ENCODE measurements at regions of chr18 and their contacts with region 1.

Region 1: GRCh38 chr18:10519999-10520935 is 5.6 kb upstream of the NAPG start:
- DNase-seq: peak; percentile 92
- ATAC-seq: peak; percentile 91
- H3K4me3 ChIP-seq: peak overlapping the region; percentile 12; the same call in 1 of the 2 replicates
- H3K27ac ChIP-seq: no peak overlapping the region
- H3K4me1 ChIP-seq: peaks cover 8% of the 10 kb centered on the region
- H3K27me3 ChIP-seq: peaks cover 10% of the 10 kb centered on the region; the same call in 1 of the 2 replicates
- CTCF ChIP-seq: peak; percentile 97
- POLR2A ChIP-seq: 0 out of 2 replicates have a peak, but pooled peaks have one; percentile 29
- RAD21 ChIP-seq: peak; percentile 99

Region 2: GRCh38 chr18:9987931-9988330 is 532.3 kb before region 1 on chr18:
- CTCF ChIA-PET with region 1: interaction called, 3 read pairs
- POLR2A ChIA-PET with region 1: no interaction called
- dilution Hi-C with region 1: loop called (anchors 25 kb)
- in situ Hi-C with region 1: no loop called
- intact Hi-C with region 1: no loop called
- DNase-seq: no peak
- ATAC-seq: no peak
- H3K4me3 ChIP-seq: no peak overlapping the region
- H3K27ac ChIP-seq: no peak overlapping the region
- H3K4me1 ChIP-seq: peaks cover 4% of the 10 kb centered on the region; the same call in 1 of the 2 replicates
- H3K27me3 ChIP-seq: peaks cover 25% of the 10 kb centered on the region
- CTCF ChIP-seq: no peak
- POLR2A ChIP-seq: no peak
- RAD21 ChIP-seq: no peak

Region 3: DNA sequence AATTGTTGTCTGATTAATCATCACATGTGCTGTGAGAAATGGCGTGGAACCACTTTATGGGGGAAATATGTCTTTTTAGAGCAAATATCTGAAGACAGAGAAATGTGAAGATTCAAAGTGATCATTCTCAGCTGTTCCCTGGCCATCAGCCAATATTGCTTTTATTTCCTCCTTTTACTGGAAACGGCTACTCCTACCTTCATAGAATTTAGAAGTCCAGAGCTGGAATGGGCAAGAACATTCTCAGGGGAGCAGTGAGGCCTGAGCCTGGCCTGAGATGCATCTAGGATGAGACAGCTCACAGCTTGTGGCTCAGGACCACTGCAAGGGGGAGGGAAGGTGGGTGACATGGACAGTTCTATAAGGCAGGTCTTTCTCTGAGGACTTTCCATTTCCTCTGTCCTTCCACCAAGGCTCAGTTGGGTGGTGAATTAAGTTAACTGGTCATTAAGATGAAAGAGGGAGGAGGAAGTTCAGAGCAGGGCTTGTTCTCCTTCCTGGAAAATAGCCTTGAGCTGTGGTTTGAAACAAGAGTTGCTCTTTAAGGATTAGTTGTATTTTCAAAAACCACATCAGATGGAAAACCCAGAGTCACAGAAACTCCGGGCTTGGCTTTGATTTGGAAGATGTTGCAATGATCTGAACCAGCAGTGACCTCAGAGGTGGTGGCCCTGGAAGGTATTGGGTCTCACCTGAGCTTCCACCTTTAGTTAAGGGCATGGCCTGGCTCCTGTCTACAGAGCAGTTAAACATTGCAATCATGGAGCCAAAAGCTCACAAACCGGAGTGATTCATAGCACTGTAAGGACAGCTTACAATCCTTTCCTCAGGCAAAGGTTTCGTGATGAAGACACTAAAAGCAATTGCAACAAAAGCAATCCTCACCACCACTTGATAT is 462.1 kb before region 1 on chr18:
- CTCF ChIA-PET with region 1: no interaction called
- POLR2A ChIA-PET with region 1: no interaction called
- dilution Hi-C with region 1: no loop called
- in situ Hi-C with region 1: no loop called
- intact Hi-C with region 1: loop called (anchors 5 kb)
- DNase-seq: peak; percentile 84
- ATAC-seq: peak; percentile 45
- H3K4me3 ChIP-seq: no peak overlapping the region
- H3K27ac ChIP-seq: peak overlapping the region; percentile 97
- H3K4me1 ChIP-seq: peaks cover 38% of the 10 kb centered on the region
- H3K27me3 ChIP-seq: no peaks in the 10 kb centered on the region
- CTCF ChIP-seq: no peak
- POLR2A ChIP-seq: no peak
- RAD21 ChIP-seq: no peak

Region 4: DNA sequence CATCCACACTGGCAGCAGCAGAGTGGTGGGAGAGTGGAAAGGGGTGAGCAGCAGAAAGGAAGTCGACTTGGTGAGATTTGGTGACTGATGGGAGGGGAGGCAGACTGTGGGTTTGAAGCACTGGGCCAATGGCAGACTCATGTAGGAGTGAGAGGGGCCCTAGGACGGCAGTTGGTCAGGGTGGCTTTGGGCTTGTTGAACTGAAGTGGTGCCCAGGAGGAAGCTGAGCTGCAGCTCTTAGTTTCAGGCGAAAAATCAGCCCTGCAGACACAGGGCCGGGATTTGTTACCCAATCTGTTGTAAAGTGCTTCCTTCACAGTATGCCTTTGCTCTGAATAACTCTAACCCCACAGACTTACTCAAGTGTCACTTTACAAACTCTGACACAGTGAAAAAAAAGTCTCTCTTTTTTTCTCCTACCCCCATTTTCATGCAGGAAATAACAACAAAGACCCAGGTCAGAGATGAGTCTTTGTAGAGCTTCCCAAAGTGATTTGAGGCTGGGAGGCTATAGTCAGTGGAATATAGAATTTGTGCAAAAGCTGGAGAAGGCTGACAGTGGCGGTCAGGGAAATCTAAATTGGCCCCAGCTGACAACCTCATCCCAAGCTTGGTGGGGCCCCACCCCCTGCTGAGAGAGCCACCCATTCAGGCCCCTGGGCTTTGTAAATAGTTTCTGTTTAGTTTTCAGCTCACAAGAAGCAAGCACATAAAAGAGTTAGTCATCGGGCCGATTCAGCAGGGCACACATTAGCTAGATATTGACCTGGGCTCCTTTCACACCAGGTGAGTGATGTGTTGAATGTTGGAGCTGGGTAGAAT is 379.6 kb before region 1 on chr18:
- CTCF ChIA-PET with region 1: interaction called, 3 read pairs
- POLR2A ChIA-PET with region 1: no interaction called
- dilution Hi-C with region 1: no loop called
- in situ Hi-C with region 1: no loop called
- intact Hi-C with region 1: loop called (anchors 1 kb)
- DNase-seq: peak; percentile 52
- ATAC-seq: peak; percentile 45
- H3K4me3 ChIP-seq: no peak overlapping the region
- H3K27ac ChIP-seq: peak overlapping the region; percentile 63
- H3K4me1 ChIP-seq: peaks cover 32% of the 10 kb centered on the region
- H3K27me3 ChIP-seq: no peaks in the 10 kb centered on the region
- CTCF ChIP-seq: no peak
- POLR2A ChIP-seq: no peak
- RAD21 ChIP-seq: no peak

Region 5: DNA sequence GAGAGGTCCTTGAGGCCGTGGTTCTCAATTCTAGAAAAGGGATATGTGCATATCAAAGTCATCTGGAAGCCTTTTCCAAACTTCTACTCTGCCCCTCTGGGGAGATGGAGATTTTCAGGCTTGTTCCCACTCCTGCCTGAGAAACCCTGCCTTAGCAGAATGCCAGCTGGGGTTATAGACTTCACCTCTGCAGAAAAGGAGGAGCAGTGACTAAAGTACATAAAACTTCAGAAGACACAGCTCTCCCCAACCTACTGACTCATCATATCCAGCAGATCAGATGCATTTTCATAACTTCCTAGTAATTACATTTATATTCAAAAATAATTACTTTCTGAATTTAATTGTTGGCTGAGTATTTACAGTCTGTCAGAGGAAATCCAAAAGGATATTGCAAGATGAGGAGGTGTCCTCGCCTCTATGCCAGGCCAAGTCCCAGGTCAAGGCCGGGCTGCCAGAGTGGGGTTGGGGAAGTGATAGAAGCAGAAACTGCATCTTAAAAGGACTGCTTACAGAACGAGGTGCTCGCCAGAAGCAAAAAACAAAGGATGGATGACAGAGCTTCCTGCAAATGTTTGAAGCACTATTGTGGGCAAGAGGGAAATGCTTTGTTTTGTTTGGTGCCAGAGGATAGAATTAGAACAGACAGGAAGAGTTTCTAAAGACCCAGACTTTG is 141.4 kb before region 1 on chr18:
- CTCF ChIA-PET with region 1: no interaction called
- POLR2A ChIA-PET with region 1: no interaction called
- dilution Hi-C with region 1: no loop called
- in situ Hi-C with region 1: no loop called
- intact Hi-C with region 1: loop called (anchors 10 kb)
- DNase-seq: peak; percentile 78
- ATAC-seq: peak; percentile 53
- H3K4me3 ChIP-seq: no peak overlapping the region
- H3K27ac ChIP-seq: peak overlapping the region; percentile 61
- H3K4me1 ChIP-seq: peaks cover 24% of the 10 kb centered on the region
- H3K27me3 ChIP-seq: no peaks in the 10 kb centered on the region
- CTCF ChIP-seq: no peak
- POLR2A ChIP-seq: no peak
- RAD21 ChIP-seq: no peak

Region 6: DNA sequence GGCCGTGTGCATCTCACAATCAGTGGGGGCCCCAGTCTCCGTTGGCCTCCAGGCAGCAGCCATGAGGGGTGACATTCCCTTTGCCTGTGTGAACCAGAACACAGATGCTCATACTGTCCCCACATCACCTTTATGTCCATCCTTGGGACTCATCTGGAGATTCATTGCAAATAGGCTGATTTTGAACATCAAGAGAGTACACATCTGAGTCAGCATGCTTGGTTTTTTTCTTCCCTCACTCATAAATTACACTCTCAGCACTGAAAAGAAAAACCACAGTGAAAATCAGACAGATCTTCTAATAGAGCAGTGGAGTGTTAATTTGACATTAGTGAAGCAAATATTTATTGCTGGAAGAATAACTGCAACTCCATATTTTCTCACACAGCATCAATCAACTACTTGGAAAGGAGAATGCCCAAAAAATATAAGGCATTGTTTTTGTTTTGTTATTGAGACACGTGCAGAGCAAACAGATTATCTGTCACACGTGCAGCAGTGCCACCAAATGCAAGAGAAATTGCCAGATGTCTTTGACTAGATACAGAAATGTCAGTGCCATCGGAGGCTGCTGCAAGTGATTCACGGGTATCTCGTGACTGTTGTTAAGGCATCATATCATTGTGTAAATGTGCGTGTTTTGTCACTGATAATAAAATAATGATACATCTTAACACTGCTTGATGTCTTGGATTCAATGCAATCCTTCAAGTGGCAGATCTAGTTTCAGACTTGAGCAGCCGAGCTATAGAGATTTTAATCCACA is 54.9 kb before region 1 on chr18:
- CTCF ChIA-PET with region 1: no interaction called
- POLR2A ChIA-PET with region 1: no interaction called
- dilution Hi-C with region 1: no loop called
- in situ Hi-C with region 1: no loop called
- intact Hi-C with region 1: no loop called
- DNase-seq: no peak
- ATAC-seq: no peak
- H3K4me3 ChIP-seq: no peak overlapping the region
- H3K27ac ChIP-seq: no peak overlapping the region
- H3K4me1 ChIP-seq: peaks cover 4% of the 10 kb centered on the region; the same call in 1 of the 2 replicates
- H3K27me3 ChIP-seq: peaks cover 4% of the 10 kb centered on the region
- CTCF ChIP-seq: no peak
- POLR2A ChIP-seq: no peak
- RAD21 ChIP-seq: no peak

Region 7: DNA sequence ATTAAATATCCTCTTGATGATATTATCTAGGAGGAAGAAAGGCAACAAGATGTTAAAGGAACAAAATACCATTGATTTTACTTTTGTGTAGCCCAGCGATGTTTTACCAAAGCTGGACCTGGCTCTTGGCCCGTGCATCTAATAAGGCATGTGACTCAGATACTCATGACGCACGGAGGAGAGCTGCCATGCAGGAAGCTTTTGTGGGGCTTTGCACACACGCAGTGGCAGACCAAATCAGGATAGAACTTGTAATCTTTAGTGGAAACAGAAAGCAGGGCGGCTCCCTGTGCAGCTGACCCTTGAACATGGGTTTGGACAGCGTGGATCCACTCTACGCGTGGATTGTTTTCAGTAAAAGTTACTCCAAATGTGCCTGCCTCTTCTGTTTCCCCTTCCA is 195.5 kb after region 1 on chr18:
- CTCF ChIA-PET with region 1: no interaction called
- POLR2A ChIA-PET with region 1: no interaction called
- dilution Hi-C with region 1: no loop called
- in situ Hi-C with region 1: no loop called
- intact Hi-C with region 1: no loop called
- DNase-seq: peak; percentile 73
- ATAC-seq: 0 out of 2 replicates have a peak, but pooled peaks have one; percentile 29
- H3K4me3 ChIP-seq: no peak overlapping the region
- H3K27ac ChIP-seq: peak overlapping the region; percentile 23; the same call in 1 of the 2 replicates
- H3K4me1 ChIP-seq: no peaks in the 10 kb centered on the region; the same call in 1 of the 2 replicates
- H3K27me3 ChIP-seq: no peaks in the 10 kb centered on the region
- CTCF ChIP-seq: no peak
- POLR2A ChIP-seq: no peak
- RAD21 ChIP-seq: no peak

Measured in IMR-90 (cell line).